ENCODE measurements at regions of chr12 and their contacts with region 1.

Region 1: GRCh38 chr12:71636704-71637115 is 26.9 kb downstream of the ZFC3H1 start:
- DNase-seq: peak; percentile 27
- H3K4me3 ChIP-seq: no peak overlapping the region
- H3K27ac ChIP-seq: no peak overlapping the region
- H3K27me3 ChIP-seq: no peaks in the 10 kb centered on the region
- CTCF ChIP-seq: peak; percentile 74

Region 2: DNA sequence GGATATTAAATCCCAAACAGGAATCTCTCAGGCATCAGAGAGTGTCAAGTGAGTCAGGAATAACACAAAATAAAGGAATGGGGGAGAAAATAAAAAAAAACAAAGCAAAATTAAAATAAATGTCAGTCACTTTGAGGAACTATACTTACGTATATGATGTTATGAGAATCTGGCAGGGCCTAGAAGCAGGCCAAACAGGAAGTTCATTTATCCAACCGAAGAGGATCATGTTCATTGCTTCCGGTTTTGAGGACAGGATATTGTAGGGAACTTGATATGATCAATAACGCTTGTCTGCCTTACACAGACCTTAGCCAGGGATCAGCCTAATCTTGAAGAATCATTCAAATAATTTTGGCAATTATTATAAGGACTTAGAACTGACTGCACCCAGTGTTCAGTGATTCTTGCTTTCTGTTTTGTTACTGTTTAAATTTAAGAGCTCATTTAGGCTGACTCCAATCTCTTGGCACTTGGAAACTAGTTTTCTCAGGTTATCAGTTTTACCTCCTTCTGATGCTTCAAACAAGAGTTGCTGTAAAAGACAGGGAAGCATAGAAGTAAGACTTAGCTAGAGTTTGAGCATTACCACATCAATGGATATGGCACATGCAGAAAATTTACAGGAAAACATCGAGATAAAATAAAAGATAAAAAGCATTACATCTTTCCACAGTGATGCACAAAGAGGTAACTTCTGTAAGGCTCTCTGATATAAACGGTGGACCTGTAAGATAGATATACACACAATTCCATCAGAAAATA is 26.5 kb before region 1 on chr12:
- CTCF ChIA-PET with region 1: interaction called, 23 read pairs
- POLR2A ChIA-PET with region 1: no interaction called
- DNase-seq: no peak
- H3K4me3 ChIP-seq: no peak overlapping the region
- H3K27ac ChIP-seq: no peak overlapping the region
- H3K27me3 ChIP-seq: no peaks in the 10 kb centered on the region
- CTCF ChIP-seq: no peak

Region 3: DNA sequence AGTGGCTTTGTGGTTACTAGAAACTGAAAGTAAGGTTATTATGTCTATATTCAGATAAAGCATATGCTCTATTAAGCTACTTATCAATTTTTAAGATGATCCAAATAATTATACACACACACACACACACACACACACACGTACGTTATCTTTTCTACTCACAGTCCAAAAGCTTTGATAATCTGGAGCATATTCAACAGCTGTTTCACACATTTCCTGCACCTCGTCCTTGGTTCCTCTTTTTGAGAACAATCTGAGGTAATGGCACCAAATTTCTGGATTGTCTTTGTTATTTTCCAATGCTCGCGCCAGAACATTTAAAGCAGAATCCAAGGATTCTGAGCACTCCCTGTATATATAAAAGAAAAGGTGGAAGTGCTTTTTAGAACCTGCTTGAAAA is 10.6 kb before region 1 on chr12:
- CTCF ChIA-PET with region 1: interaction called, 67 read pairs
- POLR2A ChIA-PET with region 1: interaction called, 4 read pairs
- DNase-seq: no peak
- H3K4me3 ChIP-seq: no peak overlapping the region
- H3K27ac ChIP-seq: no peak overlapping the region
- H3K27me3 ChIP-seq: no peaks in the 10 kb centered on the region
- CTCF ChIP-seq: no peak